ENCODE measurements at regions of chr4 and their contacts with region 1.

Region 1: DNA sequence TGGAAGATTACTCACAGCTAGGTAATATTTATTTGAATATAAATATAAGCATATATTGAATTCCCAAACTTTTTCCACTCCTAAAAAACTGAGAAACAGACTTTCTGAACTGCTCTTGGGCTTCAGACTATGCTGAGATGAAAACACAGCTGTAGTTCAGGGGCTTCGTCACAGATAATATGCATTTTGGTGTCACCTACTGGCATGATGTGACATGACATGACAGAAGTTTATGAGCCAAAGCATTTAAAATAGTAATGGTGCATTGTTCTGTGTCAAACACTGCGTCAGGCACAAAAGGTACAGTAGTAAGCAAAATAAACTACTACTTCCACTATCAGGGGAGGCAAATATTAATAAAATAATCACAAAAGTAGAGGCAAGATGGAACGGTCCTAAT is 171.3 kb downstream of the BTC start:
- DNase-seq: peak; percentile 33 to 88
- ATAC-seq: peak; percentile 45 to 49; a peak in 3 of 6 replicates
- H3K4me3 ChIP-seq: no peak overlapping the region
- H3K27ac ChIP-seq: peak overlapping the region; percentile 89 to 96
- H3K4me1 ChIP-seq: peaks cover 94% of the 10 kb centered on the region
- CTCF ChIP-seq: peak; percentile 72
- EP300 ChIP-seq: no peak
- POLR2A ChIP-seq: no peak
- RAD21 ChIP-seq: peak; percentile 89 to 90

Region 2: GRCh38 chr4:74654230-74654681 is 31.2 kb after region 1 on chr4:
- CTCF ChIA-PET with region 1: interaction called, 4 read pairs
- POLR2A ChIA-PET with region 1: interaction called, 10 read pairs
- DNase-seq: peak; percentile 59 to 99
- ATAC-seq: peak; percentile 95 to 96
- H3K4me3 ChIP-seq: peak overlapping the region; percentile 24; the same call in 1 of the 3 replicates
- H3K27ac ChIP-seq: peak overlapping the region; percentile 99 to 100
- H3K4me1 ChIP-seq: peaks cover 60% of the 10 kb centered on the region
- CTCF ChIP-seq: no peak
- EP300 ChIP-seq: peak; percentile 100
- POLR2A ChIP-seq: no peak
- RAD21 ChIP-seq: peak; percentile 59 to 70

Region 3: DNA sequence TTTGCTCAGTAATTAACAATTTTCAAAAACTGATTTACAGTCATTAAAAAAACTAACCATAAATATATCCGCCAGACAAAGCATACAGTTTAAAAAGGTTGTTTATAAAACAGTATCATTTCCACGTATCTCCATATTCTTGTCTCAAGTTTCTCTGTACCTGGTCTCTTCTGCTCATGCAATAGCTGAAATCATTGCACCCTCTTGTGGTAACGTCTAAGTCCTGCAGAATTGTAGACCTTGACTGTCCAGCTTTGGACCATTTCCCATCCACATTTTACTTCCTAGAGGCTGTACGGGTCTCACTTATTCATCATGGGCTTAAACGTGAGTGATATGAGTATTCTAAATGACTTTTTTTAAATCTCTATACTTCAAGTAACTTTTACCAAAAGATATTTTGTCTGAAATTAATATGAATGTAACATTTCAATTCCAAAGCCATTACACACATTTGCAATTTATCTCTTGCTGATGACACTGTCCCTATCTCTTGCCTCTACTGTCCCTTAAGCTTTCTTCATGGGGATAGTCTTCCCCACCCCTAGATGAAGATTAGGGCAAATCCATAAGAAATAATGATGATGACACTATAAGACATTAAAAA is 52.7 kb after region 1 on chr4:
- CTCF ChIA-PET with region 1: interaction called, 21 read pairs
- POLR2A ChIA-PET with region 1: no interaction called
- DNase-seq: peak; percentile 18 to 80
- ATAC-seq: peak; percentile 78 to 90
- H3K4me3 ChIP-seq: no peak overlapping the region
- H3K27ac ChIP-seq: peak overlapping the region; percentile 32 to 71; a peak in 5 of 6 replicates
- H3K4me1 ChIP-seq: peaks cover 8% of the 10 kb centered on the region; the same call in 2 of the 3 replicates
- CTCF ChIP-seq: peak; percentile 82
- EP300 ChIP-seq: no peak
- POLR2A ChIP-seq: no peak
- RAD21 ChIP-seq: peak; percentile 85 to 94

Region 4: GRCh38 chr4:74754218-74754617 is 131.2 kb after region 1 on chr4:
- CTCF ChIA-PET with region 1: no interaction called
- POLR2A ChIA-PET with region 1: no interaction called
- DNase-seq: no peak
- ATAC-seq: no peak
- H3K4me3 ChIP-seq: no peak overlapping the region
- H3K27ac ChIP-seq: no peak overlapping the region
- H3K4me1 ChIP-seq: no peaks in the 10 kb centered on the region
- CTCF ChIP-seq: no peak
- EP300 ChIP-seq: no peak
- POLR2A ChIP-seq: no peak
- RAD21 ChIP-seq: no peak